A673 (cell line): ENCODE measurements at regions of chr11 and their contacts with region 1.

Region 1: DNA sequence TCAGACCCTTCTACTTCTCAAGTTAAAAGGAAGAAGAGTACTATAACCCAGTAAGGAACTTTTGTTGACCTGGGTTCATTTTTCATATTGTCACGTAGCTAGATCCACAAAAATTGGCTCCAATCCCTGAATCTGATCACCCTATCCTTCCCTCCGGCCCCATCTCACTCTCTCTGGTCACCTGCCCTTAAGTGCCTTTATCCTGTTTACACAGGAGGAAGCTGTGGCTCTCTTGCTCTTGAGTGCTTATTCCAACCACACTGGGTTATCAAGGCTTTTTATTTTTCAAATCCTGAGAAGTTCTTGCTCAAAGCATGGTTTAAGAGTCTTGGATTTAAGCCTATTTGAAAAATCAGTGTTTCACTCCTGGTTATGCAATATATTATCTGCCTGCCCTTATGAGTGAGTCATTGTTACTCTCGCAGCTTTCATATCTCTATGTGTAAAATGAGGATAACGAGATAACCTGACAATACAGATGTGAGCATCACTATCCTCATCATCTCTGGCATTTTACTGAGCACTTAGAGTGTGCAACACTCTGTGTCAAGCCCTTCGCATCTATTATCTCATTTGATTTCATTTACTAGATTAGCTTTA is 293.9 kb downstream of the GUCY1A2 start:
- DNase-seq: peak; percentile 15
- H3K4me3 ChIP-seq: no peak overlapping the region
- H3K27ac ChIP-seq: no peak overlapping the region
- H3K4me1 ChIP-seq: no peaks in the 10 kb centered on the region
- H3K27me3 ChIP-seq: peaks cover 3% of the 10 kb centered on the region
- CTCF ChIP-seq: no peak

Region 2: GRCh38 chr11:106974831-106975230 is 250.4 kb after region 1 on chr11:
- CTCF ChIA-PET with region 1: no interaction called
- POLR2A ChIA-PET with region 1: no interaction called
- intact Hi-C with region 1: loop called (anchors 1 kb)
- DNase-seq: peak; percentile 46
- H3K4me3 ChIP-seq: no peak overlapping the region
- H3K27ac ChIP-seq: no peak overlapping the region
- H3K4me1 ChIP-seq: peaks cover 8% of the 10 kb centered on the region
- H3K27me3 ChIP-seq: no peaks in the 10 kb centered on the region
- CTCF ChIP-seq: peak; percentile 55

Region 3: DNA sequence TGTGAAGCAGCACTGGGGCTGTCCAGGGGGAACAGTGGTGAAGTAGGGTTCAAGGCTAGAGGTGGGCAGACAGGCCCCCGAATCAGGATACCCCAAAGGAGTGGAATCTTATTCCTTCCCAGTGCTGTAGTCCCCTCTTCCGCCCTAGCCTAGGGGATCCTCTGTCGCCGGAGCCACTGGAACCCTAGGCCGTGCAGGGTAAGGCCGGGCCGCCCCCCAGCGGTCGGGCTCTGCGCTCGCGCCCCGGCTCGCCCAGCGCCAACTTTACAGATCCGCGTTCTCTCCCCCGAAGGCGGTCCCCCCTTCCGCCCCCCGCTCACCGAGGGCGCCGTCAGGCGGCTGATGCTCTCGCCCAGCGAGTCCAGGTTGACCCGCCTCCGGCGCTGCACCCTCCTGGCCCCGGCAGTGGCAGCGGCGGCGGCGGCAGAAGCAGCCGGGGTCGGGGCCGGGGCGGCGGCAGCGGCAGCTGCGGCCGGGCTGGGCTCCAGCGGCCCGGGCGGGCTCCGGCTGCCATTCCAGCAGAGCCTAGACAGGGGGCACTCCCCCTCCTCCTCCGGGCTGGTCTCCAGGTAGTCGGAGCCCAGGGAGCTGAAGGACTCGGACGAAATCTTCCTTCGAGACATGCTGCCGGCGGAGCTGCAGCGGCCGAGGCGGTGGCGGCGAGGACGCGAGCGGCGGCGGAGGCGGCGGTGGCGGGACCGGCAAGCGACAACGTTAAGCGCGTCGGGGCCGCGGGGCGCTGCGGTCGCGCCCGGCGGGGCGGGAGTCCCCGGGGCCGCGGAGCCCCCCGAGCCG is 293.2 kb after region 1 on chr11:
- CTCF ChIA-PET with region 1: interaction called, 3 read pairs
- POLR2A ChIA-PET with region 1: no interaction called
- intact Hi-C with region 1: loop called (anchors 1 kb)
- DNase-seq: peak; percentile 88
- H3K4me3 ChIP-seq: peak overlapping the region; percentile 69
- H3K27ac ChIP-seq: no peak overlapping the region
- H3K4me1 ChIP-seq: peaks cover 16% of the 10 kb centered on the region
- H3K27me3 ChIP-seq: peaks cover 40% of the 10 kb centered on the region
- CTCF ChIP-seq: peak; percentile 90

Region 4: DNA sequence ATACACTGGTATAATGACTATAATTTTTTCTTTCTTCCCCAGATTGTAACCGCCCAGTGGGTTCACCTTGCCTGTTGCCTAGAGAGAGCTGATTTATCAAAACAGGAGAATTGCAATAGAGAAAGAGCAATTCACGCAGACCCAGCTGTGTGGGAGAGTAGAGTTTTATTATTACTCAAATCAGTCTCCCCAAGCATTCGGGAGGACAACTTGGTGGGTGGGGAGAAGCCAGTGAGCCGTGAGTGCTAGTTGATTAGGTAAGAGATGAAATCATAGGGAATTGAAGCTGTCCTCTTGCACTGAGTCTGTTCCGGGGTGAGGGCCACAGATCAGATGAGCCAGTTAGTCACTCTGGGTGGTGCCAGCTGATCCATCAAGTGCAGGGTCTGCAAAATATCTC is 1061.0 kb after region 1 on chr11:
- CTCF ChIA-PET with region 1: no interaction called
- POLR2A ChIA-PET with region 1: no interaction called
- intact Hi-C with region 1: loop called (anchors 10 kb)
- DNase-seq: no peak
- H3K4me3 ChIP-seq: no peak overlapping the region
- H3K27ac ChIP-seq: no peak overlapping the region
- H3K4me1 ChIP-seq: no peaks in the 10 kb centered on the region
- H3K27me3 ChIP-seq: no peaks in the 10 kb centered on the region
- CTCF ChIP-seq: no peak